Prostate gland (tissue), 2 donors: ENCODE measurements at regions of chr2 and their contacts with region 1.

Region 1: DNA sequence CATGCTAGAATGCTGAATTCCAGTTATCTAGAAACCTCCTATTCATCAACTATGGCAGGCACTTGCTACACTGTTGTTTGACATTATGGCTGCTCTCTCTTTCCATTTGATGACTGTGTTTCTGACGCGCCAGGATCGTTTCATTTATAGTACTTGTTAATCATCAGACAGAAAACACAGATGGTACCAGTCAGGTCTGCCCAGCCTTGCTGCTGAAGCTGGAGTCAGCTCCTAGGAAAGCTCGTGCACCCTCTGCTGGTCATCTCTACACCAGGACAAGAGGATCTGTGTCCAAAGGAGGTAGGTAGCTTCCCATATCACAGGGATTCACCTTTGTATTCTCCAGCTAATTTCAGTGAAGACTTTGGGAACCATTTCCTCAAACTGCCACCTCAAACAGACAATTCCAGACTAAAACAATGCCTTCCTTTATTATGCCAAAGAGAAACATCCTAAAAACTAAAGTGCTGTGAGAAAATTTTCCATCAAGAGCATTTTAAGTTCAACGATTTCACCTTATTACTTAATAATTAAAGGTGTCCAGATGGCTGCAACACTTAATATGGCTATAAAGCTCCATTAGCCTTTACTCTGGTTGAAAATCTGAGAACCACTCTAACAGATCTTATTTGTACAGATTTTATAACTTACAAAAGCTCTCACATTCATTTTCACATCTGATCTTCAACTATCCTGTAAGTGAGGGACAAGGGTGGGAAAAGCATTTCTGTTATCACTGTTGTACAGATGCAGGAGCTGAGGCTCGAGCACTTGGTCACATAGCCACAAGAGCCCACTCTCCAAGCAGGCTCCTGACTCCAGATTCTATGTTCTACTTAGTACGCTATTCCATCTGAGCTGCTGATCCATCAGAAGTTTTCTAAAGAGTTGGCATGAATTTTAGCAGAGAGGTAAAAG is 17.5 kb downstream of the METTL8 start:
- DNase-seq: peak; percentile 94
- H3K4me3 ChIP-seq: no peak overlapping the region
- H3K27ac ChIP-seq: peak overlapping the region; percentile 17 to 59
- H3K4me1 ChIP-seq: no peaks in the 10 kb centered on the region
- H3K27me3 ChIP-seq: no peaks in the 10 kb centered on the region
- CTCF ChIP-seq: peak; percentile 66 to 91 (median 90)
- POLR2A ChIP-seq: no peak

Region 2: DNA sequence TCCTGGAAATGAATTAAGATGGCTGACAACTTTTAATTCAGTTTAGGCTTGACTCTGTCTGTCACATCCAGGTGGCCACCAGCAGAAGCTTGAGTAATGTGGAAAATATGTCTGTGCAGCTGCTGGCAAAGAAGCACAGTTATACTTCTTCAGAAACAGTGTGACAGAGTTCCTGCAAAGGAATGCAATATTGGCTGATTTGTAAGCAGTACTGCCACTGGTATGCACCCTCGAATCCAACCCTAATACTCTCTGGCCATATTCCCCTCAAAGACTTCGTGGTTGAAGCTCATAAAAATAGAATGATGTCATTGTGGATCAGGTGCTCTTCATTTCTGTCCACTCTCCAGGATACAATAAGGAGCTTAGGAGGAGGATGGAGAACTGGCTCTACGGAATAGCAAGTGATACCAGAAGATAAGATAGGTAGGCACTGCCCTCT is 68.7 kb before region 1 on chr2:
- intact Hi-C with region 1: loop called (anchors 5 kb)
- DNase-seq: peak; percentile 22
- H3K4me3 ChIP-seq: no peak overlapping the region
- H3K27ac ChIP-seq: peak overlapping the region; percentile 36 to 49
- H3K4me1 ChIP-seq: peaks cover 8% of the 10 kb centered on the region
- H3K27me3 ChIP-seq: no peaks in the 10 kb centered on the region
- CTCF ChIP-seq: no peak
- POLR2A ChIP-seq: no peak